Endothelial cell of umbilical vein (primary cell): ENCODE measurements at regions of chr15 and their contacts with region 1.

Region 1: GRCh38 chr15:38002883-38003477 is 68.5 kb downstream of the TMCO5A start:
- DNase-seq: peak; percentile 75
- H3K4me3 ChIP-seq: no peak overlapping the region
- H3K27ac ChIP-seq: no peak overlapping the region
- H3K4me1 ChIP-seq: no peaks in the 10 kb centered on the region
- H3K27me3 ChIP-seq: peaks cover 0 to 2% of the 10 kb centered on the region in 2 experiments
- CTCF ChIP-seq: peak; percentile 75
- POLR2A ChIP-seq: no peak

Region 2: DNA sequence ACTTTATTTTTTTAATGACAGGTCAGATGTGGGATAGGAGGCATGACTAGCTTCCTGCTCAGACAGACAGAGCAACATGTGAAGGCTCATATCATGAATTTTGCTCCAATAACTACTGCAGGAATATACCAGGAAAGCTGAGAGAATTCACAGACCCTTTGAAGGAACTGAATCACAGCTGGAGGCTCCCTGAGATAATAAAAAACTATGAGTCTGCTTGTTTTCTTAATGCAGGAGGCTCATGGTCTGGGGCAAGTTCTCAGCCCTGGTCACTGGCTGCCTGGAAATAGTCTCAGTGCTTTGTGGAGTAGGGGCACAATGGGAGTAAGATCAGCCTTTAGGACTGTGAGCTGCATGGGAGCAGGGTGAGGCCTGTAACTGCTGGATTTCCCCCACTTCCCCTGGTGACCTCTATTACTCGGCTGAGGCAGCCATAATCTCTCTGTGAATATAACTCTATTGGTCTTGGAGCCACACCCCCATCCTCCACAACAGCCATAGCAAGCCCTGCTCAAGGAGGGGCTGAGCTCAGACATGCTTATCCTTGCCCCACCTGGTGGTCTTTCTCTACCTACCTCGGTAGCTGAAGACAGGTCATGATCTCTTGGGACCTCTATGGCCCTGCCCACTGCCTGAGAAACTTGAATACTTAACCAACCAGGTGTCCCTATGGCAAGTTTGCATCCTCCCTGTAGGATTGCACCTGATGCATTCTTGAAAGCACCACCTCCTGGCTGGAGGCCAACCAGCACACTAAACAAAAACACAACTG is 350.1 kb before region 1 on chr15:
- CTCF ChIA-PET with region 1: no interaction called
- POLR2A ChIA-PET with region 1: no interaction called
- dilution Hi-C with region 1: no loop called
- intact Hi-C with region 1: no loop called
- DNase-seq: no peak
- H3K4me3 ChIP-seq: no peak overlapping the region
- H3K27ac ChIP-seq: no peak overlapping the region
- H3K4me1 ChIP-seq: no peaks in the 10 kb centered on the region
- H3K27me3 ChIP-seq: no peaks in the 10 kb centered on the region
- CTCF ChIP-seq: no peak
- POLR2A ChIP-seq: no peak

Region 3: DNA sequence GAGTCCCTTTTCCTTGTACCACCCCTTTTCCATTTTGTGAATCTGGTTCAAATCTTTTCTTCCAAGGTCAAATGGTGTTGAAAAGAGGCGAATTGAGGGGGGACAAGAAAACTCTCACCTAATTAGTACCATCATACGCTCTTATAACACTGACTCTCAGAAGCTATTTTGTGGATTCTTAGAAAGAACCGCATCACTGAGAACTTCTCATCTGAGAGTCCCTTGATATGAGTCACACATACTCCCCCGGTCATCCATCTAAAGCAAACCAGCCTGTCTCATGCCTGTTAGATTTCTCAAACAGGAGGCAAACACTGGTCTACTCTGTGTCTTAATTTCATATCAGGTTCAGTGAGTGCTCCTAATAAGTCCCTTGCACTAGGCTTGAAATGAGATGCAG is 173.2 kb after region 1 on chr15:
- CTCF ChIA-PET with region 1: no interaction called
- POLR2A ChIA-PET with region 1: no interaction called
- dilution Hi-C with region 1: no loop called
- intact Hi-C with region 1: loop called (anchors 10 kb)
- DNase-seq: no peak
- H3K4me3 ChIP-seq: no peak overlapping the region
- H3K27ac ChIP-seq: no peak overlapping the region
- H3K4me1 ChIP-seq: no peaks in the 10 kb centered on the region
- H3K27me3 ChIP-seq: peaks cover 30 to 52% of the 10 kb centered on the region in 2 experiments
- CTCF ChIP-seq: no peak
- POLR2A ChIP-seq: no peak

Region 4: DNA sequence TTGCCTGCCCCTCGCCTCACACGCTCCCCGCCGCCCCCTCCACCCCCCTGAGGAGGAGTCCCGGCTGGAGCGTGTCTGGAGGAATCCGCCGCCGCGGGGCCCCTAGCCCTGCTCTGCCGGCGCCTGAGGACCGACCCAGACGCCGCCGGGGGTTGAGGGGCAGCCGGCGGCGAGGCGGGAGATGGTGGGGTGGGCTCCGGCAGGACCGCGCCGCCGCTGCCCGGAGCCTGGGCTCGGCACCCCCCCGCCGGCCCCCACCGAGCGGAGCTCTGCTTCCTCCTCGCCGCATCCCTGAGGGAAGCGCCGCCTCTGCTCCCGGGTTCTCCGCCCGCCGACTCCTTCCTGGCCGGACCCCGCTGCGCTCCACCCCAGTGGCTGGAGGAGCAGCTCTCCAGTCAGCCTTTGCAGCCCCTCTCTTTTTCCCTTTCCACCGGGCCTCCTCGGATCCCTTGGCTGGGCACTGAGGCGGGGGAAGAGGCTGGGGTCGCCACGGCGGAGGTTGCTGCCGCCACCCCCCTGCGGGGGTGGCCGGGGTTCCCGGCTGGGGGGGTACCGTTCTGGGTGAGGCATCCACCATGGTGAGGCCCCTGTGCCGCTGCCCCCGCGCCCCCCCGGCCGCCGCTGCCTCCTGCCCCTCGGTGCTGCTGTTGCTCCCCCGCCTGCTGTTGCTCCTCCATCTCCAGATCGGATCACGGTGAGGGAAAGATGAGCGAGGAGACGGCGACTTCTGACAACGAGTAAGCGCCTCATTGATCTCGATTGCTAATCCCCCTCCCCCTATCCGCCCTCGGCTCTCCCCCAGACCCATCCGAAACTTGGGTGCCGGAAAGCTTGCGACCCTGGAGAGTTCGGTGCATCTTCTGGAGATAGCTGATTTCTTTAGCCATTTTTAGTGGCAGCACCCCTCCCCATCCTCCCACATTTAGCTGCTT is 249.8 kb after region 1 on chr15 and contains the start of gene SPRED1:
- CTCF ChIA-PET with region 1: interaction called, 13 read pairs
- POLR2A ChIA-PET with region 1: no interaction called
- dilution Hi-C with region 1: no loop called
- intact Hi-C with region 1: loop called (anchors 2 kb)
- DNase-seq: peak; percentile 69
- H3K4me3 ChIP-seq: peak within 1 kb of the TSS; percentile 77 to 95 (median 91)
- H3K27ac ChIP-seq: peak within 1 kb of the TSS; percentile 69
- H3K4me1 ChIP-seq: peaks cover 22% of the 10 kb centered on the region
- H3K27me3 ChIP-seq: peaks cover 5 to 9% of the 10 kb centered on the region in 2 experiments
- CTCF ChIP-seq: no peak
- POLR2A ChIP-seq: no peak
- total RNA-seq, gene SPRED1: 10.7 and 16.4 TPM in 2 replicates

Region 5: GRCh38 chr15:38354315-38354929 is 351.4 kb after region 1 on chr15:
- CTCF ChIA-PET with region 1: interaction called, 110 read pairs
- POLR2A ChIA-PET with region 1: no interaction called
- dilution Hi-C with region 1: loop called (anchors 25 kb)
- intact Hi-C with region 1: loop called (anchors 1 kb)
- DNase-seq: peak; percentile 80
- H3K4me3 ChIP-seq: no peak overlapping the region
- H3K27ac ChIP-seq: no peak overlapping the region
- H3K4me1 ChIP-seq: no peaks in the 10 kb centered on the region
- H3K27me3 ChIP-seq: no peaks in the 10 kb centered on the region
- CTCF ChIP-seq: peak; percentile 62 to 69
- POLR2A ChIP-seq: no peak

Region 6: GRCh38 chr15:38389924-38390542 is 387.1 kb after region 1 on chr15:
- CTCF ChIA-PET with region 1: interaction called, 18 read pairs
- POLR2A ChIA-PET with region 1: no interaction called
- dilution Hi-C with region 1: no loop called
- intact Hi-C with region 1: loop called (anchors 1 kb)
- DNase-seq: peak; percentile 68
- H3K4me3 ChIP-seq: no peak overlapping the region
- H3K27ac ChIP-seq: no peak overlapping the region
- H3K4me1 ChIP-seq: no peaks in the 10 kb centered on the region
- H3K27me3 ChIP-seq: peaks cover 0 to under 1% of the 10 kb centered on the region in 2 experiments
- CTCF ChIP-seq: peak; percentile 80 to 84
- POLR2A ChIP-seq: no peak

Region 7: GRCh38 chr15:38414357-38414756 is 411.4 kb after region 1 on chr15:
- CTCF ChIA-PET with region 1: interaction called, 12 read pairs
- POLR2A ChIA-PET with region 1: no interaction called
- dilution Hi-C with region 1: no loop called
- intact Hi-C with region 1: loop called (anchors 1 kb)
- DNase-seq: peak; percentile 53
- H3K4me3 ChIP-seq: no peak overlapping the region
- H3K27ac ChIP-seq: no peak overlapping the region
- H3K4me1 ChIP-seq: no peaks in the 10 kb centered on the region
- H3K27me3 ChIP-seq: peaks cover 23 to 31% of the 10 kb centered on the region in 2 experiments
- CTCF ChIP-seq: peak; percentile 49 to 71
- POLR2A ChIP-seq: no peak